K562 (cell line): ENCODE measurements at regions of chr11 and their contacts with region 1.

Region 1: DNA sequence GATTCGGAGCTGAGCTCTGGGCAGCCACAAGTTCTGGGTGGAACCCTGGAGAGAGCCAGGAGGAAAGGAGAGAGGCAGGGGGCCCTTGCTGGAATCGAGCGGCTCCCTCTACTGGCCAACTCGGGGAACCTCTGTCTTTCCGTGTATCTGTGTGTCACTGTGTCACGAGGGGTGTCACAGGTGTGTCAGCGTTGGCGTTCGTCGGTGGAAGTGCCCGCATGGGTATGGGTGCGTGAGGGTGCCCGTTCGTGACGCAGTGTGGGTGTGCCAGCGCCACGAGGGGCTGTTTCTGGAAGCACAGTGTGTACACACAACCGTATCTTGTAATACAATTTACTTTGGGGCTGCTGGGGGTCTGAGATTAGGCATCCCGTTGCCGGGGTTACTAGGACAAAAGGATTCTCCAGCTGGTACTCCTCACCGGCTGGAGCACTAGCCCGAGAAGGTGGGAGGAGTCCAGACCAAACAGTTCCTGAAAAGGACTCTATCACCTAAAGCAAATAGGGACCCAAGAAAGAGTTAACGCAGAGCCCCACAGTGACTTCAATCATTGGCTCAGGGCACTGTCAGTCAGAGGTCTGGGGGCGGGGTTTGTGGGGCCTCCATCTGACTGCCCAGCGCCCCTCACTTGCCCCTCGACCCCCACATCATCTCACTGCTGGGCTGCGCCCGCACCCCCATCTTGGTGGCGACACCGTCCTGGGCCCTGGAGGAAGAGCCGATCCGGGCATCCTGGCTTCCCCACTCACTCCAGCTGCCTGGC is 2.6 kb upstream of the BCL9L start:
- DNase-seq: peak; percentile 93 to 99 (median 94)
- ATAC-seq: peak; percentile 79
- H3K4me3 ChIP-seq: peak overlapping the region; percentile 64
- H3K27ac ChIP-seq: peak overlapping the region; percentile 59
- H3K4me1 ChIP-seq: peaks cover 23 to 60% of the 10 kb centered on the region in 2 experiments; a peak in 4 of 5 replicates
- H3K27me3 ChIP-seq: no peaks in the 10 kb centered on the region
- CTCF ChIP-seq: peak; percentile 92 to 97 (median 94)
- EP300 ChIP-seq: peak; percentile 24; the same call in 1 of the 2 replicates
- POLR2A ChIP-seq: no peak
- RAD21 ChIP-seq: peak; percentile 67 to 87

Region 2: GRCh38 chr11:118659314-118659952 is 268.9 kb before region 1 on chr11:
- CTCF ChIA-PET with region 1: interaction called, 18 read pairs
- POLR2A ChIA-PET with region 1: interaction called, 3 read pairs
- in situ Hi-C with region 1: no loop called
- intact Hi-C with region 1: no loop called
- DNase-seq: peak; percentile 91 to 98 (median 96)
- ATAC-seq: peak; percentile 98
- H3K4me3 ChIP-seq: no peak overlapping the region
- H3K27ac ChIP-seq: no peak overlapping the region
- H3K4me1 ChIP-seq: peaks cover 0 to 32% of the 10 kb centered on the region in 2 experiments; a peak in 2 of 5 replicates
- H3K27me3 ChIP-seq: no peaks in the 10 kb centered on the region
- CTCF ChIP-seq: peak; percentile 99
- EP300 ChIP-seq: no peak
- POLR2A ChIP-seq: no peak
- RAD21 ChIP-seq: peak; percentile 86 to 94

Region 3: DNA sequence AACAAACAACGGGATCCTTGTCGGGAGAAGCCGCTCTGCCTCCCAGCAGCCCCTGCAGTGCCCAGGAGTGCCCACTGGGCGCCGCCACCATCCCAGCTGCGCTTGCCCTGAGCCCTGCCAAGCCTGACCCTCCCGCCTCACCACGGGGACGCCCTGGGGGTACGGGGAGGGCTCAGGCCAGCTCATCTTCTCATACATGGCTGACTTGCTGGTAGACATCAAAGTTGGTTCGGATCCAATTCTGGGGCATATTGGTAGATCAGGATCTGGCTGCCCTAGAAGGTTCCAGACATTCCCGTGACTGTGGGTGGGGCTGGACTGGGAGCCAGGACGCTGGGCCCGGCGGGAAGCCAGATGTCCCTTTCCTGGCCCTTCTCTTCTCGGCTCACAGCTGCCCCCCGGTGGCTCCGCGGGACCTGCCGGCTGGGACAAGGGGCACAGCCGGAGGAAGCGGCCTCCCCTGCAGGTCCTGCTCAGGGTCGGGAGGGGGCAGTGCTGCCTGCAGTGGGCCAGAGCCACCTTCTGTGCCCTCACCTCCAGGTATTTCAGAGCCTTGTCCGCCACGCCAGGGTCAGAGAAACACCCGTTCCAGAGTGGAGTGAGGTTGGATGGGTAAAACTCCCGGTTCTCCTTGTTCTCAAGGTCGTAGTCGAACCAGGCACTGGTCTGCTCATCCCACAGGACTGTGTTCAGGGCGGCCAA is 238.3 kb before region 1 on chr11:
- CTCF ChIA-PET with region 1: interaction called, 4 read pairs
- POLR2A ChIA-PET with region 1: no interaction called
- in situ Hi-C with region 1: no loop called
- intact Hi-C with region 1: loop called (anchors 2 kb)
- DNase-seq: peak; percentile 91 to 96 (median 94)
- ATAC-seq: peak; percentile 99
- H3K4me3 ChIP-seq: no peak overlapping the region
- H3K27ac ChIP-seq: peak overlapping the region; percentile 11; the same call in 2 of the 3 replicates
- H3K4me1 ChIP-seq: peaks cover 0 to 36% of the 10 kb centered on the region in 2 experiments; a peak in 3 of 5 replicates
- H3K27me3 ChIP-seq: no peaks in the 10 kb centered on the region
- CTCF ChIP-seq: peak; percentile 98 to 99 (median 99)
- EP300 ChIP-seq: no peak
- POLR2A ChIP-seq: no peak
- RAD21 ChIP-seq: peak; percentile 89 to 96

Region 4: DNA sequence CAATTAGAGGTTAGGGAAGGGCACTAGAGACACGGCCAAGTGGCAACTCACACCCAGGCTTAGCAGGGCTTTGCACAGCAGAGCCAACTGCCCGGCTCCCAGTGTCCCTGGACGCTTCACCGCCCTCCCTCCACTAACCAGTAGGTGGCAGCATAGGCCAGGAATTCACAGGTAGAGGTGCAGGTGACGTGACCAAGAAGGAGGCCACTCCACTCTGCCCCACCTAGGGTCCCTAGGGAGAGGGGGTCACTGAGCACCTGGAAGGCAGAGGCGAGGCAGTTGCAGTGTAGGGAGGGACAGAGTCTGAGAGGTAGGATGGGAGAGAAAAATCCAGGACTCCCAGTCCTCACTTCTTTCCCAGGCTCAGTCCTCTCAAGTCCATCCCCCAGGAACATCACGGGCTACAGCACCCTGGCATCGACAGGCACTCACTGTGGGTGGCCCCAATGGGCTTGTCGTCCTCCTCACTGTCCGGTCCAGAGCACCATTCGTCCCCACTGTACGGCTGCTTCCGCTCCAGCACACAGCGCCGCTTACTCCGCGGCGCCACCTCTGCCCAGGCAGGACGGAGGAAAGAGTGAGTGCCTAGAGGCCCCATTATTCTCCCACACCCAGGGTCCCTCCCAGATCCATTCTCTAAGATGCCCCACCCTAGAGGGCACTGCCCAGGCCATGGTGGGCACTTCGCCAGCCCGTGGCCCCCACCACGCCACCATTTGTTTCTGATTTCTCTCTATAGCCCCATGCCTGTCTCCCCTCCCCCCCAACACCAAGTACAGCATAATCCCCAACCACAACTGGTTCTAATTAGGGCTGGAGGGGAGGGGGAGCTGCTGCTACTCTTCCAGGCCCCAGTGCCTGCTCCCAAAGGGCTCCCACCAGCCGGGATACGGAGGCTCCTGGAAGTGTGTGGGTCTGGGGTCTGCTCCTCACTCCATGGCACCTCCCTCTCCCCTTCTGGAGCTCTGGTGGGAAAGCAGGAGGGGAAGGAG is 20.9 kb before region 1 on chr11:
- CTCF ChIA-PET with region 1: interaction called, 25 read pairs
- POLR2A ChIA-PET with region 1: interaction called, 16 read pairs
- in situ Hi-C with region 1: no loop called
- intact Hi-C with region 1: loop called (anchors 1 kb)
- DNase-seq: peak; percentile 80 to 88 (median 80)
- ATAC-seq: peak; percentile 79
- H3K4me3 ChIP-seq: no peak overlapping the region
- H3K27ac ChIP-seq: no peak overlapping the region
- H3K4me1 ChIP-seq: peaks cover 24 to 50% of the 10 kb centered on the region in 2 experiments
- H3K27me3 ChIP-seq: no peaks in the 10 kb centered on the region
- CTCF ChIP-seq: peak; percentile 93 to 95 (median 95)
- EP300 ChIP-seq: no peak
- POLR2A ChIP-seq: no peak
- RAD21 ChIP-seq: peak; percentile 96 to 98

Region 5: DNA sequence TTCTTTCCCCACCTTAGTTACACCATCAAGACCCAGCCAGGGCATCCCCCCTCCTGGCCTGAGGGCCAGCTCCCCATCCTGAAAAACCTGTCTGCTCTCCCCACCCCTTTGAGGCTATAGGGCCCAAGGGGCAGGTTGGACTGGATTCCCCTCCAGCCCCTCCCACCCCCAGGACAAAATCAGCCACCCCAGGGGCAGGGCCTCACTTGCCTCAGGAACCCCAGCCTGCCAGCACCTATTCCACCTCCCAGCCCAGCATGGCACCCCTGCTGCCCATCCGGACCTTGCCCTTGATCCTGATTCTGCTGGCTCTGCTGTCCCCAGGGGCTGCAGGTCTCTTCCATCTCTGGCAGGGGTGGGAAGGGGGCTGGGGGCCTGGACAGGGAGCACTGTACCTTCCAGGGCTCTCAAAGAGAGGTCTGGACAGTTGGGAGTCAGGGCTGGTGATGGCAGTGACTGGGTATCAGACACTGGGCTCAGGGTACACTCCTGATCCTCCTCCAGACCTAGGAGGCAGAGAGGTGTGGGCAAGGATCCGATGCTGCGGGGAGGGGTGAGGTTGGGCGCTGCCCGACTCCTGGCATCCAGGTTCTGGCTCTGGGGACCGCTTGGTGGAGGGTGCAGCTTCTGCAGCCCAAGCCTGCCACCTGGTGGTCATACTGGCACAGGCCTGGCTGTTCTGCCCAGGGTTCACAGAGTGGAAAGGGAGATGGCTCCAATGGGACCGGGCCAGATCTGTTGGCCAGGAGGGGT is 28.0 kb after region 1 on chr11 and contains the start of gene UPK2:
- CTCF ChIA-PET with region 1: interaction called, 3 read pairs
- POLR2A ChIA-PET with region 1: interaction called, 3 read pairs
- in situ Hi-C with region 1: no loop called
- intact Hi-C with region 1: loop called (anchors 2 kb)
- DNase-seq: peak; percentile 84 to 91 (median 90)
- ATAC-seq: peak; percentile 98
- H3K4me3 ChIP-seq: no peak within 1 kb of the TSS
- H3K27ac ChIP-seq: no peak within 1 kb of the TSS
- H3K4me1 ChIP-seq: peaks cover 0 to 17% of the 10 kb centered on the region in 2 experiments; a peak in 3 of 5 replicates
- H3K27me3 ChIP-seq: peaks cover 12 to 33% of the 10 kb centered on the region in 2 experiments; a peak in 4 of 5 replicates
- CTCF ChIP-seq: peak; percentile 92 to 97 (median 95)
- EP300 ChIP-seq: no peak
- POLR2A ChIP-seq: no peak
- RAD21 ChIP-seq: peak; percentile 89 to 96
- polyA plus RNA-seq, gene UPK2: not detected

Region 6: GRCh38 chr11:119095066-119095880 is 167.0 kb after region 1 on chr11:
- CTCF ChIA-PET with region 1: no interaction called
- POLR2A ChIA-PET with region 1: interaction called, 3 read pairs
- in situ Hi-C with region 1: no loop called
- intact Hi-C with region 1: loop called (anchors 2 kb)
- DNase-seq: peak; percentile 96 to 99 (median 98)
- ATAC-seq: peak; percentile 81
- H3K4me3 ChIP-seq: peak overlapping the region; percentile 94
- H3K27ac ChIP-seq: peak overlapping the region; percentile 95
- H3K4me1 ChIP-seq: peaks cover 24 to 28% of the 10 kb centered on the region in 2 experiments; a peak in 4 of 5 replicates
- H3K27me3 ChIP-seq: no peaks in the 10 kb centered on the region; a peak in 1 of 5 replicates
- CTCF ChIP-seq: peak; percentile 19 to 43 (median 42); a peak in 3 of 6 replicates
- EP300 ChIP-seq: no peak
- POLR2A ChIP-seq: peak; percentile 100
- RAD21 ChIP-seq: peak; percentile 25 to 31

Region 7: GRCh38 chr11:119323538-119324033 is 395.3 kb after region 1 on chr11:
- CTCF ChIA-PET with region 1: no interaction called
- POLR2A ChIA-PET with region 1: interaction called, 3 read pairs
- in situ Hi-C with region 1: no loop called
- intact Hi-C with region 1: loop called (anchors 5 kb)
- DNase-seq: peak; percentile 56 to 86 (median 62)
- ATAC-seq: no peak
- H3K4me3 ChIP-seq: no peak overlapping the region
- H3K27ac ChIP-seq: no peak overlapping the region
- H3K4me1 ChIP-seq: peaks cover 27 to 40% of the 10 kb centered on the region in 2 experiments
- H3K27me3 ChIP-seq: no peaks in the 10 kb centered on the region; a peak in 1 of 5 replicates
- CTCF ChIP-seq: peak; percentile 83 to 94 (median 88)
- EP300 ChIP-seq: no peak; the same call in 1 of the 2 replicates
- POLR2A ChIP-seq: no peak
- RAD21 ChIP-seq: peak; percentile 57 to 81